Mammary epithelial cell (primary cell): ENCODE measurements at regions of chr2 and their contacts with region 1.

Region 1: DNA sequence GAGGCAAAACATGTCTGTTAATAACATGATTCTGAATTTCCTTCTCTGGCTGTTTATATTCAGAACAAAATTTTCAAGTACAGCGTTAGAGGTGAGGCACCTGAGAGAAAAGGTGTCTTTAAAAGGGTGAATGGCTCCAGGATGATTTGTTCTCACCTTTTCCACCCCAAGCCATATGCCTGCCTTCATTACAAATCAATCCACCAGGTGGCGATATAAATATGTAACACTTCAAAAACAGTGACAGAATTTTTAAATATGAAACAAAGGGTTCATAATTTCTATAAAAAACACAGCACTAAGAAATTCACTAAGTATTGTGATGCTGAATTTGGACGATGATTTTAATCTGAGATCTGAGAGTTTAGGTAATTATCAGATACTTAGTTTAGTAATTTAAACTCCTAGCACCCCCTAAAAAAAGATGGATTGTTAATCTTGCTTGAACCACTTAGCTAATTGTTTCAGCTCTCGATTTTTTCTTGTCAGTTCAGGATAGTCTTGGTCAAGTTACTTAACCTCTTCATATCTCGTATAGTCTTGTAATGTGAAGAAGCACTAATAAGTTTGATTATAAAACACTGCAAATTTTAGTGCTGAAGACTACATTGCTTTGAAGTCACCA is 528.8 kb downstream of the CPS1 start:
- DNase-seq: peak; percentile 32
- H3K4me3 ChIP-seq: no peak overlapping the region
- H3K27ac ChIP-seq: no peak overlapping the region
- H3K4me1 ChIP-seq: no peaks in the 10 kb centered on the region
- H3K27me3 ChIP-seq: no peaks in the 10 kb centered on the region
- CTCF ChIP-seq: peak; percentile 54 to 60

Region 2: DNA sequence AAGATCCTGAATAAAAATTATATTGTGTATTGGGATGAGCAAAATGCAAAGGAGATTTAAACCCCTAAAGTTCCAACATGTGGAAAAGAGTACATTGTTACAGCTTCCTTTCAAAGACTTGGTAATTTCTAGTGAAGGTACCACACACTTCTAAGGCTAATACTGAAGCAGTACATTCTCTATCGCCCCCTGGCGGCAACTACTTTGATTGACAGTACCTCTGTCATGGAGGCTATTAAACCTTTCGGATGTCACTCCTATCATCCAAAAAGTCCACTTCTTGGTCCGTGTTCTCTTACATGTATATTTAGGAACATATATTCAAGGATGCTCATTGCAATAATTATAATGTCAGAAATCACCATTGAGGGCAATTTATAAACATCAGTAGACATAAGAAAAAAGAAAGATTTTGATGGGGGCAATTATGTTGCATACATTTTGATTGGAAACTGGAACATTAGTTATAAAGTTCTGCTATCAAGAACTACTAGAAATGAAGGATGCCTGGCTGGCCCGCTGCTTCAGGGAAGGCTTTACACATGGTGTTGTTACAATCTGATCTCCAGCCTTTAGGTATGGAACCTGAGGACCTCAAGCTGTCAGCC is 72.8 kb after region 1 on chr2:
- CTCF ChIA-PET with region 1: no interaction called
- dilution Hi-C with region 1: no loop called
- in situ Hi-C with region 1: loop called in 1 of 2 experiments (anchors 5 kb)
- intact Hi-C with region 1: loop called (anchors 1 kb)
- DNase-seq: peak; percentile 58
- H3K4me3 ChIP-seq: no peak overlapping the region
- H3K27ac ChIP-seq: no peak overlapping the region
- H3K4me1 ChIP-seq: no peaks in the 10 kb centered on the region
- H3K27me3 ChIP-seq: no peaks in the 10 kb centered on the region
- CTCF ChIP-seq: peak; percentile 81 to 87

Region 3: DNA sequence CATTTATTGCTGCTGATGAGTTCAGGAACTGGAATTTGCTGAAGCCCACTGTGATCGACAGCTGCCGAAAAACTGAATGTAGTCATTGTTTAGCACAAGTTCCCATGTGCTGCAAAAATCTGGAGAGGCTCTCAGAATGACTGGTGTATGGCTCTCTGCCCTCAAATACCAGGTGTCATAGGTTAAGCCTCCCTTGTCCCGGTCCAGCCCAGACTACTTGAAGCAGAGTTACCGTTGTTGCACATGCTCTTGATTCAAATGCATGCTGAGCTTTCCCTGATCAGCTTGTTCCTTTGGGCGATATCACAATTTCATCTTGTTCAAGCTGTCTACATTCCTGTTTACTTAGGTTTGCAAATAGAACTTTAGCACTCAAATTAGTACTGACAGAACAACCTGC is 96.5 kb after region 1 on chr2:
- CTCF ChIA-PET with region 1: no interaction called
- dilution Hi-C with region 1: loop called (anchors 5 kb)
- in situ Hi-C with region 1: no loop called
- intact Hi-C with region 1: no loop called
- DNase-seq: no peak
- H3K4me3 ChIP-seq: no peak overlapping the region
- H3K27ac ChIP-seq: no peak overlapping the region
- H3K4me1 ChIP-seq: no peaks in the 10 kb centered on the region
- H3K27me3 ChIP-seq: peaks cover 5% of the 10 kb centered on the region
- CTCF ChIP-seq: no peak